ENCODE measurements at regions of chr14 and their contacts with region 1.

Region 1: DNA sequence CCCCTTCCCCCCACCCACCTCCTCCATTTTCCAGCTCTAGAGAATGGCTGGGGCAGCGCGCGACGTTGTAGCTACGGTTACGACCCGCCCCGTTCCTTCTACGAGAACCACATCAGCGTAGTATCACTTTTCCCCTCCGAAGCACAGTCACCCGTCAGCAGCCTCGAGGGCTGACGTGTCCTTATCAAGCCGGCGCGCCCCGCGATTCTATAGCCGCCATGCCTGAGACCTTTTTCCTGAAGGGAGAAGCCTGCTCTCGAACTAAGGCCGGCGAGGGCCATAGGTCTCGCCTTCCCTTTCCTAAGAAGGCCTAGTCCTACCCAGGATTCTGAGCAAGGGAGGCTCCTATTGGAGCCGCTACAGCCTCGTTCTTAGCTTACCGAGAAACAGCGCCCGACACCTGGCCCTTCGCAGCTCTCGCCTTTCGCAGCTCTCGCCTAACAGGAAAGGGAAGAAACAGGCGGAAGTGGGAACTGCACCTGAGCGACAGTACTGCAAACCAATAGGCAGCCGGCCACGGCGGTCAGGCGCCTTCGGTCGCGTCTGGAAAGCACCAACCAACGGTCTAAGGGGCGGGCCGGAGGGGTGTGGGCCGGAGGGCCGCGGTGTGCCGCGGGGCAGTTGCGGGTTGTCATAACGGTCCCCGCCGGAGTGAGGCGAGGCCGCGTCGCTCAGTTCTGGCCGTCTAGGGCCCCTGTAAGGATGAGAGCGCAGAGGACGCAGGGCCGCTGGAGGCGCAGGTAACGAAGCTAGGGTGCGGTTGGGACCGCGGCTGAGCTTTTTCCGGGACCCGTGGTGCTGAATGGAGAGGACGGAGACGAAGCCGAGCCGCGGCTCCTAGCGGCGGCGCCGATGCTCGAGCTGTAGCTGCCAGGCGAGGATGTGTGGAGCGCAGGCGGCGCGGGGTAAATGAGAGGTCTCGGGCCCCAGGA is at the starts of genes MGAT2 and RPL36AL:
- DNase-seq: peak; percentile 97
- ATAC-seq: peak; percentile 92
- H3K4me3 ChIP-seq: peak within 1 kb of the TSS; percentile 92
- H3K27ac ChIP-seq: peak within 1 kb of the TSS; percentile 98
- H3K4me1 ChIP-seq: no peaks in the 10 kb centered on the region; the same call in 1 of the 2 replicates
- H3K27me3 ChIP-seq: no peaks in the 10 kb centered on the region
- CTCF ChIP-seq: peak; percentile 13 to 45 (median 21); a peak in 3 of 6 replicates
- EP300 ChIP-seq: no peak; a peak in 1 of 4 replicates
- POLR2A ChIP-seq: peak; percentile 99
- RAD21 ChIP-seq: no peak
- polyA plus RNA-seq, gene MGAT2: 0.03 TPM in 1 of 2 experiments, not detected in the other
- polyA plus RNA-seq, gene RPL36AL: 1,365 to 1,379 TPM

Region 2: GRCh38 chr14:49585803-49586672 is 34.4 kb before region 1 on chr14 and contains the start of gene RPS29:
- CTCF ChIA-PET with region 1: interaction called, 23 read pairs
- POLR2A ChIA-PET with region 1: interaction called, 46 read pairs
- RAD21 ChIA-PET with region 1: interaction called, 20 read pairs
- SMC1A ChIA-PET with region 1: interaction called, 11 read pairs
- in situ Hi-C with region 1: no loop called
- intact Hi-C with region 1: loop called (anchors 2 kb)
- DNase-seq: peak; percentile 99
- ATAC-seq: peak; percentile 84
- H3K4me3 ChIP-seq: peak within 1 kb of the TSS; percentile 90
- H3K27ac ChIP-seq: peak within 1 kb of the TSS; percentile 99
- H3K4me1 ChIP-seq: no peaks in the 10 kb centered on the region
- H3K27me3 ChIP-seq: no peaks in the 10 kb centered on the region
- CTCF ChIP-seq: no peak
- EP300 ChIP-seq: no peak; a peak in 1 of 4 replicates
- POLR2A ChIP-seq: peak; percentile 91
- RAD21 ChIP-seq: no peak
- polyA plus RNA-seq, gene RPS29: 7,374 to 7,763 TPM

Region 3: GRCh38 chr14:49598485-49599300 is 21.8 kb before region 1 on chr14 and contains the start of gene LRR1:
- CTCF ChIA-PET with region 1: interaction called, 15 read pairs
- POLR2A ChIA-PET with region 1: interaction called, 73 read pairs
- RAD21 ChIA-PET with region 1: interaction called, 29 read pairs
- SMC1A ChIA-PET with region 1: interaction called, 17 read pairs
- in situ Hi-C with region 1: no loop called
- intact Hi-C with region 1: loop called (anchors 1 kb)
- DNase-seq: peak; percentile 60
- ATAC-seq: peak; percentile 66
- H3K4me3 ChIP-seq: peak within 1 kb of the TSS; percentile 92
- H3K27ac ChIP-seq: peak within 1 kb of the TSS; percentile 100
- H3K4me1 ChIP-seq: peaks cover 17% of the 10 kb centered on the region
- H3K27me3 ChIP-seq: no peaks in the 10 kb centered on the region
- CTCF ChIP-seq: no peak
- EP300 ChIP-seq: peak in 1 of 2 experiments; percentile 6; a peak in 1 of 4 replicates
- POLR2A ChIP-seq: peak; percentile 93
- RAD21 ChIP-seq: no peak
- polyA plus RNA-seq, gene LRR1: 63.9 to 110 TPM

Region 4: GRCh38 chr14:49607583-49607982 is 12.9 kb before region 1 on chr14:
- CTCF ChIA-PET with region 1: interaction called, 4 read pairs
- POLR2A ChIA-PET with region 1: interaction called, 32 read pairs
- RAD21 ChIA-PET with region 1: interaction called, 5 read pairs
- SMC1A ChIA-PET with region 1: interaction called, 8 read pairs
- in situ Hi-C with region 1: no loop called
- intact Hi-C with region 1: no loop called
- DNase-seq: no peak
- ATAC-seq: no peak
- H3K4me3 ChIP-seq: no peak overlapping the region
- H3K27ac ChIP-seq: no peak overlapping the region
- H3K4me1 ChIP-seq: no peaks in the 10 kb centered on the region
- H3K27me3 ChIP-seq: no peaks in the 10 kb centered on the region
- CTCF ChIP-seq: no peak
- EP300 ChIP-seq: no peak
- POLR2A ChIP-seq: no peak
- RAD21 ChIP-seq: no peak

Region 5: GRCh38 chr14:50667996-50668825 is 1047.8 kb after region 1 on chr14 and contains the start of gene SAV1:
- CTCF ChIA-PET with region 1: no interaction called
- POLR2A ChIA-PET with region 1: interaction called, 5 read pairs
- RAD21 ChIA-PET with region 1: no interaction called
- SMC1A ChIA-PET with region 1: no interaction called
- in situ Hi-C with region 1: no loop called
- intact Hi-C with region 1: loop called (anchors 5 kb)
- DNase-seq: no peak
- ATAC-seq: peak; percentile 78
- H3K4me3 ChIP-seq: peak within 1 kb of the TSS; percentile 90
- H3K27ac ChIP-seq: peak within 1 kb of the TSS; percentile 30
- H3K4me1 ChIP-seq: no peaks in the 10 kb centered on the region
- H3K27me3 ChIP-seq: no peaks in the 10 kb centered on the region
- CTCF ChIP-seq: no peak
- EP300 ChIP-seq: no peak
- POLR2A ChIP-seq: peak; percentile 84
- RAD21 ChIP-seq: peak; percentile 11; the same call in 1 of the 2 replicates
- polyA plus RNA-seq, gene SAV1: 10.1 to 15.1 TPM